ENCODE measurements at regions of chr1 and their contacts with region 1.

Region 1: DNA sequence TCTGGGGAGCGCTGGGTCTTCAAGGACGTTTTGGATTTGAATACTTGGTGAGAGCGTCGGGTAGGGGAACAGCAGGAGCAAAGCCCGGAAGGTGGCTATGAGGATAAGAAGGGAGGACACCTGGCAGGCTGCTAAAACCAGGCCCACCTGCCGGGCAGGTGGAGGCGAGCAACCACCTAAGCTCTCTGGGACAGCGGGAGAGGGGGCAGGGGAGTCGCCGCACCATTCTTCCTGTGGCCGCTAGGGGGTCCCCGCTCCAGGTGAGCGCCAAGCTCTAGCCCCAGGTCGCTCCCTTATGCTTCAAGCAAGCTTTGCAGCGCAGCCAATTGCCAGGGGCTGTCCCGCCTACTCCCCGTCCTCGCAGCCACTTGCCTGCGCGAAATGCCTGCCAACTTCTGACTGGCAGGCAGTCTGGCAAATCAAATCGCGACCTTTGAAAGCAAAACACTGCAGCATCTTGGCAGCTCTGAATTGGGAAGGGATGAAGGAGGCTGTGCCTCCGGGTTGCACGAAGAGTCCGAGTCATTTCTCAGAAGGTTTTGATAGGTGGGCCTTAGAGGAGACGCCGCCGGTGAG is at the start of gene NIPAL3:
- DNase-seq: peak; percentile 98 to 99 (median 98)
- ATAC-seq: peak; percentile 95 to 96
- H3K4me3 ChIP-seq: peak within 1 kb of the TSS; percentile 90
- H3K27ac ChIP-seq: peak within 1 kb of the TSS; percentile 25
- H3K4me1 ChIP-seq: peaks cover 6% of the 10 kb centered on the region
- H3K27me3 ChIP-seq: no peaks in the 10 kb centered on the region
- total RNA-seq, gene NIPAL3: 24.4 to 35.6 (median 35.3) TPM

Region 2: DNA sequence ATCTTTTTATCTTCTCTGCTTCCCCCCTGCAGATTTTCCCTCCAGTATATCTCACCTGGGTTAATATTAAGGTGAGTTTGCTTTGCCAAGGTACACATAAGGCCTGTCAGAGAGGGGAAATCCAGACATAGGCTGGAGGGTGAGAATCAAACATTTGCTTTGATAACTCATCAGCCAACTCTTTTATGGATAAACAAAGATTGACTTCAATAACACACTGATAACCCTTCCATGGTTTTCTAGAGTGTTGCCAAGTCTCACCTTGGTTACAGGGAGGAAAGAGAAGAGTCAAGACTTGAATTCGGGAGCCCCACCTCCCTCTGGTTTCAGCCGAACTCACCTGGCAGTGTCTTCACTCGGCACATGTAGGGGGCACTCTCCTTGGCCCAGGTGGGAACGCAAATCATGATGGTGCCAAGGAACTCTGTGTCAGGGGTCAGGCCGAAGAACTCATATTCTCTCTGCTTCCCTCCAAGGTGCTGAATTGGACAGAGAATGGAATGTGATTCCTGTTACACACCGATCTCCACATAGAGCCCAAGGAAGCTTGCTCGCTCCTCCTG is 287.5 kb before region 1 on chr1:
- intact Hi-C with region 1: no loop called
- DNase-seq: no peak
- ATAC-seq: no peak
- H3K4me3 ChIP-seq: no peak overlapping the region
- H3K27ac ChIP-seq: no peak overlapping the region
- H3K4me1 ChIP-seq: no peaks in the 10 kb centered on the region
- H3K27me3 ChIP-seq: no peaks in the 10 kb centered on the region

Region 3: GRCh38 chr1:24502709-24503058 is 87.3 kb after region 1 on chr1 and contains the start of gene RCAN3:
- intact Hi-C with region 1: loop called in 1 of 4 experiments (anchors 10 kb)
- DNase-seq: peak; percentile 89 to 95 (median 95)
- ATAC-seq: peak; percentile 98
- H3K4me3 ChIP-seq: peak within 1 kb of the TSS; percentile 93
- H3K27ac ChIP-seq: peak within 1 kb of the TSS; percentile 82
- H3K4me1 ChIP-seq: no peaks in the 10 kb centered on the region
- H3K27me3 ChIP-seq: no peaks in the 10 kb centered on the region
- total RNA-seq, gene RCAN3: 5.7 to 6.6 (median 6.3) TPM

Region 4: GRCh38 chr1:24621121-24621520 is 205.7 kb after region 1 on chr1:
- intact Hi-C with region 1: loop called in 1 of 4 experiments (anchors 10 kb)
- DNase-seq: no peak
- ATAC-seq: no peak
- H3K4me3 ChIP-seq: no peak overlapping the region
- H3K27ac ChIP-seq: no peak overlapping the region
- H3K4me1 ChIP-seq: no peaks in the 10 kb centered on the region
- H3K27me3 ChIP-seq: no peaks in the 10 kb centered on the region

Region 5: DNA sequence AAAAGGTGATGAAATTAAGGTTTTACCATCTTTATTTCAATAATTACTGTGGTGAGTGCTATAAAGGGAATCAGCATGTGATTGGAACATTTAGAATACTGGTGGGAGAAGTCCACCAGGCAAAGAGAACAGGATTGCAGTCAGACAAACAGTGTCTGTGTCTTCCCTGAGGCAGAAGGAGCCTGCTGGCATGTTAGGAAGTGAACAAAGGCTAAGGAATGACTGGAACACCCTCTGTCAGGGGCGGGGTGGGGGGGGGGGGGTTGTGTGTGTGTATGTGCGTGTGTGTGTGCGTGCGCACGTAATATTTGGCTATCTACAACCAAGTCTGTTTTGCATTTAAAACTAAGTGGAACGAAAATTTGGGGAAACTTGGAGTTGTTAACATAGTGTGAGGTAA is 257.9 kb after region 1 on chr1:
- intact Hi-C with region 1: no loop called
- DNase-seq: no peak
- ATAC-seq: no peak
- H3K4me3 ChIP-seq: no peak overlapping the region
- H3K27ac ChIP-seq: no peak overlapping the region
- H3K4me1 ChIP-seq: peaks cover 1% of the 10 kb centered on the region
- H3K27me3 ChIP-seq: no peaks in the 10 kb centered on the region

Measured in right cardiac atrium (tissue), 5 donors.